ENCODE measurements at regions of chr5 and their contacts with region 1.

Region 1: GRCh38 chr5:81301271-81302015 is at the start of gene ZCCHC9:
- DNase-seq: peak; percentile 92 to 94
- H3K4me3 ChIP-seq: peak within 1 kb of the TSS; percentile 86
- H3K4me3 Mint-ChIP-seq: peak within 1 kb of the TSS; percentile 91
- H3K27ac Mint-ChIP-seq: peak within 1 kb of the TSS; percentile 93
- H3K4me1 ChIP-seq: peaks cover 18% of the 10 kb centered on the region
- H3K4me1 Mint-ChIP-seq: peaks cover 14% of the 10 kb centered on the region
- H3K27me3 ChIP-seq: no peaks in the 10 kb centered on the region
- H3K27me3 Mint-ChIP-seq: no peaks in the 10 kb centered on the region
- CTCF ChIP-seq: peak in 1 of 2 experiments; percentile 46
- total RNA-seq, gene ZCCHC9: 72.2 and 82.2 TPM in 2 replicates

Region 2: GRCh38 chr5:80686757-80687156 is 614.7 kb before region 1 on chr5:
- CTCF ChIA-PET with region 1: no interaction called
- POLR2A ChIA-PET with region 1: no interaction called
- intact Hi-C with region 1: loop called (anchors 1 kb)
- DNase-seq: no peak
- H3K4me3 ChIP-seq: no peak overlapping the region
- H3K4me3 Mint-ChIP-seq: no peak overlapping the region
- H3K27ac Mint-ChIP-seq: no peak overlapping the region
- H3K4me1 ChIP-seq: no peaks in the 10 kb centered on the region
- H3K4me1 Mint-ChIP-seq: no peaks in the 10 kb centered on the region
- H3K27me3 ChIP-seq: no peaks in the 10 kb centered on the region
- H3K27me3 Mint-ChIP-seq: no peaks in the 10 kb centered on the region
- CTCF ChIP-seq: peak; percentile 33 to 34

Region 3: DNA sequence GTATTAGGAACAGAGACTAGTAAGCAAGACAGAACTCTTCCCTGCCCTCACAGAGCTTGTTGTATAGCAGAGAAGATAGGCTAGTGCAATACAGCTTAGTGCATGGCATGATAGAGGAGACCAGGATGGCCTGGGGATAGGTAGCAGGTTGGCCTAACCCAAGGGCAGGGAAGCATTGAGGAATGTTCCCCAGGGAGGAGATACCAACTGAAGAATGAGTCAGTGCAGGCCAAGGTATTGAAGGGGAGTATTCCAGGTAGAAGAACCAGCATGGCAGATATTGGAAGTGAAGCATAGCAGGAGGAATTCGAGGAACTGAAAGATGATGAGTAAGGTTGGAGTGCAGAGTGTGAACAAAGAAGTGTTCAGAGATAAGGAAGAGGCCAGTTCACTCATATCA is 508.1 kb before region 1 on chr5:
- CTCF ChIA-PET with region 1: no interaction called
- POLR2A ChIA-PET with region 1: no interaction called
- intact Hi-C with region 1: no loop called
- DNase-seq: no peak
- H3K4me3 ChIP-seq: no peak overlapping the region
- H3K4me3 Mint-ChIP-seq: no peak overlapping the region
- H3K27ac Mint-ChIP-seq: no peak overlapping the region
- H3K4me1 ChIP-seq: peaks cover 5% of the 10 kb centered on the region; the same call in 1 of the 2 replicates
- H3K4me1 Mint-ChIP-seq: no peaks in the 10 kb centered on the region
- H3K27me3 ChIP-seq: no peaks in the 10 kb centered on the region
- H3K27me3 Mint-ChIP-seq: no peaks in the 10 kb centered on the region
- CTCF ChIP-seq: no peak

Region 4: DNA sequence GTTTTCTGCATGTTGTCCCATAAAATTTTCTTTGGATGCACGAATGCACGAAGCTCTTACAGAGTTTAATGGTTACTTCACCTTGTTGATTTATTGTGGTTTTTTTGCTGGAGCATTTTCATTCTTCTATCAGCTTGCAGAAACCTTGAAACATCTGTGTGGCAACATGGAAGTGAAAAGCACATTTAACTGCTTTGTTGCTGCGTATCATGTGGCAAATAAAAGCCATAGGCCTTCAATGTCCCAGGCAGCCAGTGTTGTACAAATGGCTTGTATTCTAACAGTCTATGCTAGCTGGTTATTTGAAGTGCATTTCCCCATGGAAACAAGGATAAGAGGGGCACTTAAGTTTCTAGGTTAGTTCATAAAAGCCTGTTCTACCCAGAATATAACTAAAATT is 383.8 kb before region 1 on chr5:
- CTCF ChIA-PET with region 1: interaction called, 12 read pairs
- POLR2A ChIA-PET with region 1: no interaction called
- intact Hi-C with region 1: no loop called
- DNase-seq: no peak
- H3K4me3 ChIP-seq: no peak overlapping the region
- H3K4me3 Mint-ChIP-seq: no peak overlapping the region
- H3K27ac Mint-ChIP-seq: no peak overlapping the region
- H3K4me1 ChIP-seq: no peaks in the 10 kb centered on the region; the same call in 1 of the 2 replicates
- H3K4me1 Mint-ChIP-seq: no peaks in the 10 kb centered on the region
- H3K27me3 ChIP-seq: no peaks in the 10 kb centered on the region
- H3K27me3 Mint-ChIP-seq: no peaks in the 10 kb centered on the region
- CTCF ChIP-seq: no peak

Region 5: GRCh38 chr5:81233080-81233634 is 68.3 kb before region 1 on chr5 and contains the start of gene CKMT2:
- CTCF ChIA-PET with region 1: no interaction called
- POLR2A ChIA-PET with region 1: no interaction called
- intact Hi-C with region 1: no loop called
- DNase-seq: no peak
- H3K4me3 ChIP-seq: no peak within 1 kb of the TSS
- H3K4me3 Mint-ChIP-seq: peak within 1 kb of the TSS; percentile 44
- H3K27ac Mint-ChIP-seq: no peak within 1 kb of the TSS
- H3K4me1 ChIP-seq: no peaks in the 10 kb centered on the region
- H3K4me1 Mint-ChIP-seq: no peaks in the 10 kb centered on the region
- H3K27me3 ChIP-seq: no peaks in the 10 kb centered on the region
- H3K27me3 Mint-ChIP-seq: no peaks in the 10 kb centered on the region
- CTCF ChIP-seq: no peak
- total RNA-seq, gene CKMT2: not detected in 2 replicates

Region 6: DNA sequence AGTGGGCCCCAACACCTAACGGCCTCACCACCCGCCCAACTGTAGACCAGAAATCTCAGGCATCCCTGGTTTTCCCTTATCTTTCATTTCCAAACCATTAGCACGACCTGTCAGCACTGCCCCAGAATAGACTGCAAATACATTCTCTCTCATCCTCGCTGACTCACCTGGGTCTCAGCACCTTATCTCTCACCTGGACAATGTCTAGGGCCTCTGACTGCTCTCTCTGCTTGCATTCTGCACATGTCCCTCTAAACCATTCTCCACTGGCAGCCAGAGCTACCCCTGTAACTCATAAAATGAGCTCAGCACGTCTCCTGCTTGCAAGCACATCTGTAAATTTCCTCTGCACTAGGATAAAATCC is 55.6 kb before region 1 on chr5:
- CTCF ChIA-PET with region 1: no interaction called
- POLR2A ChIA-PET with region 1: no interaction called
- intact Hi-C with region 1: loop called (anchors 1 kb)
- DNase-seq: peak; percentile 68 to 82
- H3K4me3 ChIP-seq: no peak overlapping the region
- H3K4me3 Mint-ChIP-seq: peak overlapping the region; percentile 26
- H3K27ac Mint-ChIP-seq: peak overlapping the region; percentile 37
- H3K4me1 ChIP-seq: peaks cover 46% of the 10 kb centered on the region
- H3K4me1 Mint-ChIP-seq: peaks cover 42% of the 10 kb centered on the region
- H3K27me3 ChIP-seq: no peaks in the 10 kb centered on the region
- H3K27me3 Mint-ChIP-seq: no peaks in the 10 kb centered on the region
- CTCF ChIP-seq: no peak

Region 7: DNA sequence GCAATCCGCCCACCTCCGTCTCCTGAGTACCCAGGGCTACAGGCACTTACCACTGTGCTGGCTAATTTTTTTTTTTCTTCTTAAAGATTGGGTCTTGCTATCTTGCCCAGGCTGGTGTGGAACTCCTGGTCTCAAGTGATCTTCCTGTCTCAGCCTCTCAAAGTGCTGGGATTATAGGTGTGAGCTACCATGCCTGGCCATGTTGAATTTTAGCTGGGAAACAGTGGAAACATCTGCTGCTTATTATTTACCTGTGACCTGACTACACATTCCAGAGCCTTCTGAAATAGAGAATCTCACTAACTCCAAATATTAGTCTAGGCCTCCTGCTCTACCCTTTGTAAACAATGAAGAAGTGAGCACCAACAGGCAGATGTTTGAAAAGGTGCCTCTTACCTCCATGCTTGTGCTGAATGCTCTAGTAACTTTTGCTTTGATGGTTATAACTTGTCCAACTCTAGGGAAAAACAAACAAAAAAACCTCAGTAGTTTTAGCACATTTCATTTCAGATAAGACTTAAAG is 70.0 kb after region 1 on chr5:
- CTCF ChIA-PET with region 1: interaction called, 5 read pairs
- POLR2A ChIA-PET with region 1: no interaction called
- intact Hi-C with region 1: loop called (anchors 1 kb)
- DNase-seq: peak; percentile 81 to 82
- H3K4me3 ChIP-seq: no peak overlapping the region
- H3K4me3 Mint-ChIP-seq: peak overlapping the region; percentile 45
- H3K27ac Mint-ChIP-seq: peak overlapping the region; percentile 57
- H3K4me1 ChIP-seq: peaks cover 45% of the 10 kb centered on the region
- H3K4me1 Mint-ChIP-seq: peaks cover 60% of the 10 kb centered on the region
- H3K27me3 ChIP-seq: no peaks in the 10 kb centered on the region
- H3K27me3 Mint-ChIP-seq: no peaks in the 10 kb centered on the region
- CTCF ChIP-seq: no peak